H1 (cell line): ENCODE measurements at regions of chr20 and their contacts with region 1.

Region 1: DNA sequence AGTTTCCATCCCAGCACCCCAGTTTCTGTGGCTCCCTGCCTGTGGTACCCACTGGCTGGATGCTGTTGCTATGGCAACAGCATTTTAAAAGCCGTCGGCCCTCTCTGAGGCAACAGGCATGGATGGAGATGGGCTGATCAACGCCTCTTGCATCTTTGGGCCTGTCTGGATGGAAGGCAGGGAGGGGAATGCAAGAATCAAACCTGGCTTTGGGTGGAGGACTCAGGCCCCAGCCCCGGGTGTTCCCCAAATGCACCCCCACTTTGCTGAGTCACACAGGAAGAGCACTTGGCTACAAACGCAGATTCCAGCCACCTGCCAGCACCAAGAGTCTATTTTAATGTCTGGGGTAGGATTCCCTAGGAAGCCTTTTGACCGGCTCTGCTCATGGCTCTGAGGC is 45.7 kb upstream of the TGM2 start:
- DNase-seq: no peak
- H3K4me3 ChIP-seq: no peak overlapping the region
- H3K27ac ChIP-seq: no peak overlapping the region
- H3K4me1 ChIP-seq: no peaks in the 10 kb centered on the region
- H3K27me3 ChIP-seq: no peaks in the 10 kb centered on the region
- CTCF ChIP-seq: no peak
- EP300 ChIP-seq: no peak
- POLR2A ChIP-seq: no peak
- RAD21 ChIP-seq: no peak

Region 2: DNA sequence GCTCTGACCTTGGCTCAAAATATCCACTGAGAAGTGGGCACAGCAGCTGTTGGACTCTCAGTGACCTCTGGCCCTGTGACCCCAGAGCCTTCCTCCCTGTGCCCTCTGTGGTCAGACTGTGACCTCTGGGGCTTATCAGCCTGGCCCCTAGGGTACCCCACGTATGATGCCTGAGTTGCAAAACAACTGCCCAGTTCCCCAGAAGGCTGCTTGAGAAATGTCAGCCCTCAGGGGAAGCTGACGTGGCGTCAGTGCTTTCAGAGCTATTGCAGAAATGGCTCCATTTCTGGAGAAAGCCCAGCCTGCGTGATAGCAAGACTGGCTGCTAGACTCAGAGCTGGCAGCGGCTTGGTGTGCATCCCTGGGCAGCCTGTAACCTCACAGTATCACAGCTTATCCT is 14.1 kb before region 1 on chr20:
- CTCF ChIA-PET with region 1: interaction called, 12 read pairs
- POLR2A ChIA-PET with region 1: no interaction called
- DNase-seq: no peak
- H3K4me3 ChIP-seq: no peak overlapping the region
- H3K27ac ChIP-seq: no peak overlapping the region
- H3K4me1 ChIP-seq: no peaks in the 10 kb centered on the region
- H3K27me3 ChIP-seq: no peaks in the 10 kb centered on the region
- CTCF ChIP-seq: no peak
- EP300 ChIP-seq: no peak
- POLR2A ChIP-seq: no peak
- RAD21 ChIP-seq: no peak